Aorta (tissue), 5 donors: ENCODE measurements at regions of chr11 and their contacts with region 1.

Region 1: DNA sequence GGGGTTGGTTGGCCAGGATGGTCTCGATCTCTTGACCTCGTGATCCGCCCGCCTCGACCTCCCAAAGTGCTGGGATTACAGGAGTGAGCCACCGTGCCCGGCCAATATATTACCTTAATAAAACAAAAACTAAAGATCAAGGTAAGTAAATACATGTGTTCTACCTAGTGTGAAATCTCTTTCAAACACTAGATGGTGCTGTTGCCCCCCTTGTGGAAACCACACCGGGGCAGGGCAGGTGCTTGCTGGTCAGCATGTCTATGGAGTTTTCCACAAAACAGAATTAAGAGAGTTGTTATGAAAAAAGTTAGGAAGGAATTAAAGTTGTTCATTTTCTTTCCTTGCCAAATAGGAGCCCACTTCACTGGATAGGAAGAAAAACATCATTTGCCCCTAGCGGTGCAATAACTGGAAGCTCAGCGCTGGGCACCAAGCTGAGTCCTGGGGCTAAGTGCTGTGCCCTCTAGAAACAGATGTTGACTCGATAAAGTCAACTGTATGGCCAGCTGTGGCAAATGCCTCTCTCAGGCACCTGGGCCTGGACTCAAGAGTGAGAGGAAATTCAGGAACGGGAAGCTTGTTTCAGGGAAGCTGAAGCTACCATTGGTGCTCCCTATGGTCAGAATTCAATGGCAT is 6.3 kb upstream of the KCNJ5 start:
- DNase-seq: no peak
- ATAC-seq: peak; percentile 76
- H3K4me3 ChIP-seq: no peak overlapping the region
- H3K27ac ChIP-seq: no peak overlapping the region
- H3K4me1 ChIP-seq: no peaks in the 10 kb centered on the region
- H3K27me3 ChIP-seq: no peaks in the 10 kb centered on the region

Region 2: GRCh38 chr11:128956401-128957201 is 71.8 kb after region 1 on chr11:
- intact Hi-C with region 1: loop called (anchors 1 to 2 kb)
- DNase-seq: no peak
- ATAC-seq: peak; percentile 55
- H3K4me3 ChIP-seq: no peak overlapping the region
- H3K27ac ChIP-seq: no peak overlapping the region
- H3K4me1 ChIP-seq: no peaks in the 10 kb centered on the region
- H3K27me3 ChIP-seq: no peaks in the 10 kb centered on the region